ENCODE measurements at regions of chr7 and their contacts with region 1.

Region 1: GRCh38 chr7:35424869-35425495 is 171.1 kb upstream of the TBX20 start:
- DNase-seq: peak; percentile 35 to 71
- ATAC-seq: peak; percentile 64 to 70 (median 66)
- H3K4me3 ChIP-seq: no peak overlapping the region
- H3K27ac ChIP-seq: no peak overlapping the region
- H3K4me1 ChIP-seq: no peaks in the 10 kb centered on the region
- H3K27me3 ChIP-seq: peaks cover 0 to 3% (median 0%) of the 10 kb centered on the region in 3 donors
- CTCF ChIP-seq: peak; percentile 69

Region 2: DNA sequence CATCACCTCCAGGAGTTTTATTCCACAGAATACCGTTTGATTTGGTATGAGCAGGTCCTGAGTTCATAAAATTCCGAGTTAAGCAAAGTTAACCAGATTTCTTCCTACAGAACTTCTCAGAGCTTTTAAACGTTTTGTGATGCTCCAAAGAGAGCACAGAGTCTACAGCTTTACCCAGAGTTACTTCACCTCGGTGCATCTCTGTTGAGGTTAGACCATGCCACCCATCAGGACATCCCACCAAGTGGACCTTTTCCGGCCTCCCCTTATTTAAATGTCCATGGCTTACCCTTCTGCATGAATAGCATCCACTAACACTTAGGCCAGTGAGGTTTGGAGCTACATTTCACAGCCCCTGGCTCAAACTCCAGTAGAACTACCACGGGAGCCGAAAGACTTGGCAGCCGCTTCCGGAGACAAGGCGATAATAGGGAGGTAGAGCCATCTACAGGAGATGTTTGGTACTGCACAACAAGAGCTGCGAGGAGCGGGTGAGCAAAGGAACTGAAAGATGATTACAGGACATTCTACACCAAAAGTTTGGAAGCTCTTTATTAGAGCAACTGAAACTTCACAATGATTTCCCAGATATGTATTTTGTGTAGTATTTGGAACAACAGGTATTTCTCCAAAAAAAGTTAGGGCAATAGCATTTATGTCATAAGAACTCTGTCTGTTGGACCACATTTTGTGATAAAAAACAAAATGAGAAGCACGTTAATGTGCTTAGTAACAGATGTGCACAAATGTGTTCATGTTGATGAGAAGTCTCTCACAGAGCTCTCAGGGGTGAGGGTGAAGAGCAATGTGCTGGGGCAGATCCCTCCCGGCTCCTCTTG is 95.2 kb after region 1 on chr7:
- intact Hi-C with region 1: loop called in 1 of 2 experiments (anchors 5 kb)
- DNase-seq: peak; percentile 60 to 80
- ATAC-seq: peak; percentile 52 to 81 (median 67)
- H3K4me3 ChIP-seq: no peak overlapping the region
- H3K27ac ChIP-seq: no peak overlapping the region
- H3K4me1 ChIP-seq: no peaks in the 10 kb centered on the region
- H3K27me3 ChIP-seq: peaks cover 0 to 5% (median 0%) of the 10 kb centered on the region in 3 donors
- CTCF ChIP-seq: peak; percentile 68

Region 3: GRCh38 chr7:35624299-35625186 is 199.6 kb after region 1 on chr7:
- intact Hi-C with region 1: loop called (anchors 5 to 10 kb)
- DNase-seq: peak in 1 of 2 donors; percentile 17
- ATAC-seq: peak; percentile 65 to 94 (median 82)
- H3K4me3 ChIP-seq: no peak overlapping the region
- H3K27ac ChIP-seq: no peak overlapping the region
- H3K4me1 ChIP-seq: no peaks in the 10 kb centered on the region
- H3K27me3 ChIP-seq: no peaks in the 10 kb centered on the region
- CTCF ChIP-seq: peak; percentile 79